Endothelial cell of umbilical vein (primary cell): ENCODE measurements at regions of chr1 and their contacts with region 1.

Region 1: DNA sequence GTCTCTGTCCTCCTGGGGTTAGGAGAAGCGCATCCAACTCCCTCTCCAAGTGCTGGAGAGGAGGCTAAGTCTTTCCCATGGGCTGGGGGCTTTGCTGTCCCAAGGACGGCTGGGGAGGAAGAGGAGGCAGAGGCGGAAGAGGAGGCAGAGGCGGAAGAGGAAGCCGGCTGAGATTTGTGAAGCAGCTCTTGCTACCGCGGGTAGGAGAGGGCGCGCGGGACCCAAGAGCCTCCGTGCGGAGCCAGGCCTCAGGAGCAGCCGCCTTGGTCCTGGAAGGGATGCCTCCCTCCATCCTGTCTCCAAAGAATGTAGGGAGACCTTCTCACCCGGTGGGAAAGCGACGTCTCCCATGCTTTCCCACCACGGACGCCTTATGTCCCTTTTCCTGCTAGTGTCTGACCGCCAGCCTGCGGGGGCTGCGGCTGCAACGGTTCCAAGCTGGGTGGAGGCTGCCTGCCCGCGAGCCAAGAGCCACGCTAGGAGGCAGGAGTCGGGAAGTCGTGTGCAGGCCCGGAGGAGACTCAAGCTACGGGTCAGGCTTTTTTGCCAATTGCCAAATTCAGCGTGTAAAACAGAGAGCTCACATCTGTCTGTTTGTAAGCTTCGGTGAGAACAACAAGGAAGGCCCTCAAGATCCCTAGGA is 320.3 kb downstream of the FAM72C start:
- DNase-seq: no peak
- H3K4me3 ChIP-seq: no peak overlapping the region
- H3K27ac ChIP-seq: no peak overlapping the region
- H3K4me1 ChIP-seq: no peaks in the 10 kb centered on the region
- H3K27me3 ChIP-seq: peaks cover 4 to 9% of the 10 kb centered on the region in 2 experiments
- CTCF ChIP-seq: no peak
- POLR2A ChIP-seq: no peak

Region 2: DNA sequence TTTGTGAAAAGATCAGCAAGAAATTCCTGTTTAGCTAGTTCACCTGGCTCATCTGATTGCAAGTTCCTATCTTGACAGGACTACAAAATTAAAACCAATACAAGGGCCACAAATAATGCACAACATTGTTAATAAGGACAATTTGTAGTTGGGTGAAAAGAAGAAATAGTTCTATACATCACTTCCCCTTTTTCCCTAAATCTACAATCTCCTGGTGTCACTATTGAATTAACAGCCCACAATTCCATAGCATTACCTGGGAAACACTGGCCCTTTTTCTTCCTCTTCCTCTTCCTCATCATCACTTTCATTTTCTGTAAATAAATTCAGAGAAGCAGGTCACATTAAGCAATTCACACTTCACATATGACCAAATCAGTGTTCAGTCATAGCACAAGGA is 46.6 kb before region 1 on chr1:
- CTCF ChIA-PET with region 1: no interaction called
- POLR2A ChIA-PET with region 1: no interaction called
- dilution Hi-C with region 1: no loop called
- intact Hi-C with region 1: loop called (anchors 5 kb)
- DNase-seq: no peak
- H3K4me3 ChIP-seq: no peak overlapping the region
- H3K27ac ChIP-seq: no peak overlapping the region
- H3K4me1 ChIP-seq: no peaks in the 10 kb centered on the region
- H3K27me3 ChIP-seq: no peaks in the 10 kb centered on the region
- CTCF ChIP-seq: no peak
- POLR2A ChIP-seq: no peak